ENCODE measurements at regions of chr1 and their contacts with region 1.

Region 1: GRCh38 chr1:45303582-45304310 is 22.9 kb upstream of the HPDL start:
- DNase-seq: peak; percentile 98 to 99
- H3K4me3 ChIP-seq: peak overlapping the region; percentile 63 to 65
- H3K27ac ChIP-seq: peak overlapping the region; percentile 84 to 92
- H3K4me1 ChIP-seq: peaks cover 0 to 13% (median 8%) of the 10 kb centered on the region in 4 donors
- H3K27me3 ChIP-seq: no peaks in the 10 kb centered on the region
- CTCF ChIP-seq: peak; percentile 49 to 62

Region 2: GRCh38 chr1:44786138-44786840 is 517.5 kb before region 1 on chr1:
- intact Hi-C with region 1: loop called (anchors 10 kb)
- DNase-seq: peak in 1 of 2 donors; percentile 83
- H3K4me3 ChIP-seq: peak overlapping the region; percentile 54 to 70
- H3K27ac ChIP-seq: peak overlapping the region; percentile 79 to 80
- H3K4me1 ChIP-seq: peaks cover 0 to 34% (median 26%) of the 10 kb centered on the region in 4 donors
- H3K27me3 ChIP-seq: no peaks in the 10 kb centered on the region
- CTCF ChIP-seq: peak; percentile 98 to 99

Region 3: GRCh38 chr1:45444609-45445171 is 140.9 kb after region 1 on chr1:
- intact Hi-C with region 1: no loop called
- DNase-seq: no peak
- H3K4me3 ChIP-seq: no peak overlapping the region
- H3K27ac ChIP-seq: no peak overlapping the region
- H3K4me1 ChIP-seq: peaks cover 0 to 5% (median 0%) of the 10 kb centered on the region in 4 donors
- H3K27me3 ChIP-seq: no peaks in the 10 kb centered on the region
- CTCF ChIP-seq: no peak

Measured in tibial artery (tissue), 4 donors.